Prostate gland (tissue), 2 donors: ENCODE measurements at regions of chr2 and their contacts with region 1.

Region 1: DNA sequence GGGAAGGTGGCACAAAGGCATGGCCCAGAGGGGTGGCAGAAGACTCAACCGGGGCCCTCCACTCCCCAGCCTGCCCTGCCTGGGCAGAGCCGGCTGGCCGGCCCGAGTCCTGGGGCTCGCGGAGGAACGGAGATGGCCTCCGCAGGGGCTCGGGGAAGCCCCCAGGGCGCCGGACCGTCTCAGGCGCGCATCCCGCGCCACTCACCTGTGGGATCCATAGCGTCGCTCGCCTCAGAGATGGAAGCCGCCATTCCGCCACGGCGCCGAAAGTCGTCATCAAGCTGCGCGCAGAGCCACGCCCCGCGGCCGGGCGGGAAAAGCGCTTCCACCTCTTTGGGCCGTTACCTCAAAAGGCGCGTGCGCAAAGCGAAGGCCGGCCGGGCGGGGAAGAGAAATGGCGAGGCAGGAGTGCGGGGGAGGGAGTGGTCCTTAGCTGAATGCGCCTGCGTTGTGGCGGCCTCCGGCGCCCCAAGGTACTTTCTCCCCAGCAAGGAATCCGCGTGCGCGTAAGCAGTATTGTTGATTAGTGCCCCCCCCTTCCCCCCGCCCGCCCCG is at the start of gene SMPD4:
- DNase-seq: peak; percentile 96
- H3K4me3 ChIP-seq: peak within 1 kb of the TSS; percentile 98
- H3K27ac ChIP-seq: peak within 1 kb of the TSS; percentile 89 to 93
- H3K4me1 ChIP-seq: peaks cover 5% of the 10 kb centered on the region
- H3K27me3 ChIP-seq: no peaks in the 10 kb centered on the region
- CTCF ChIP-seq: peak in 1 of 4 experiments; percentile 25
- POLR2A ChIP-seq: peak; percentile 37
- total RNA-seq, gene SMPD4: 38.1 to 74.5 TPM

Region 2: DNA sequence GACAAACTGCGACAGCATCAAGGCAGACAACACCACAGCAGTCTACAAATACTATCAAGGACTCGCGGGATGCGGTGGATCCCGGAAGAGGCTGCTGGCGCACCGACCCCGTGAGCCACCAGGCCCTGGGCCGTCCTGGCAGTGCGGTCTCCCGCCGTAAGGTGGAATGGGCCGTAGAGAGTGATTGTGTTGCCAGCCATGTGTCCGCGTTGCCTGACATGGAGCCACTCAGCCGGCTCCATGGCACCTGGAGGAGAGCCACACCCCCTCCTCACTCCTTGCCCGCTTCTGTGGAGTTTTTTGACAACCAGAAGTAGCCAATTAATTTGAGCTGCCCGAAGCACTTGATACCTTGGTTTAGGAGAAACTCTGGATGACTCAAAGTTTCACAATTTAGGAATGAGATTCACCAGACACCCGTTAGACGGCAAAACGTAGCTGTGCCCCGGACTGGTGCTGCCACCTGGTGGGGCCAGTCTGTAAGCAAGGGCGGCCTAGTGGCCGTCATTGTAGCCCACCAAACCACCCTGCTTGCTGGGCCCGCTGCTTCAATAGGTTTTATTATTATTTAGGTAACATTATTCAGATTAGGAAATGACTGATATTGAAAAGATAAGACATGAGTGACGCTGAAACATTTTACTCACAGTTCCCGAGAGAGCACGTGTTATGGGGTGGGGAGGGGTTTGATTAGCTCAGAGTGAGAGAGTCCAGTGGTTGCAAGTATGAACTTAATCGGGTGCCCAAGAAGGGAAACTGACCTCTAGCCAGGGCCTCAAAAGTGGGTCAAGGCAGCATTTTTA is 151.1 kb after region 1 on chr2:
- intact Hi-C with region 1: loop called (anchors 2 kb)
- DNase-seq: peak; percentile 60
- H3K4me3 ChIP-seq: no peak overlapping the region
- H3K27ac ChIP-seq: no peak overlapping the region
- H3K4me1 ChIP-seq: no peaks in the 10 kb centered on the region
- H3K27me3 ChIP-seq: no peaks in the 10 kb centered on the region
- CTCF ChIP-seq: peak; percentile 76 to 93 (median 92)
- POLR2A ChIP-seq: no peak

Region 3: DNA sequence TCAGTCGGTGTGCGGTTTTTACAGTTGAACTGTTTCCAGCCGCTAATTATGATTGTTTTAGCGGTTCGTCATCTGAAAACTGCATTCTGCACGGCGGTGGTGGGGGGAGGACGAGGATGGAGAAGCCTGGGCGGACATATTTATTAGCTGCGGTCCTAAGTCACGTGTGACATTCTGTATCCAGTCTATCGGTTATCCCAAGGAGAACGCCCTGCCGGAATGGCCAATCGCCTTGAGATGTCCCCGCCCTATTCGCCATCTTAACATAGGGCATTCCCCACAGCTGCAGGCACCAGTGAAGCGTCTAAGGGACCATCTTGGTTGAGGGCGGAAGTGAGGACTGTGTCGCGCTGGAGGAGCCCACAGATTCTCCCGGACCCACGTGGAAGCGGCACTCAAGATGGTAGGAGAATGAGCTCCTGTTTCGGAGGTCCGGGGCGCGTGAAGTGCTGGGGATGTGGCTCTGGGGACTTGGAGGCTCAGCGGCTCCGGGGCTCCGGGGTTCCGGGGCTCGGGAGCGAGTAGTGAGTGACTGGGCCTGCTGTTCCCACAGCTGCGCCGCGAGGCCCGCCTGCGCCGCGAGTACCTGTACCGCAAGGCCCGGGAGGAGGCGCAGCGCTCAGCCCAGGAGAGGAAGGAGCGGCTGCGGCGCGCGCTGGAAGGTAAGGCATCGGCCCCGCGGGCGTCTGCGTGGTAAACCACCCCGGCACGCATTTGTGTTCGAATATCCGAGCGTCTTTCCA is 161.3 kb after region 1 on chr2 and contains the start of gene IMP4:
- intact Hi-C with region 1: loop called (anchors 2 kb)
- DNase-seq: peak; percentile 99
- H3K4me3 ChIP-seq: peak within 1 kb of the TSS; percentile 71
- H3K27ac ChIP-seq: peak within 1 kb of the TSS; percentile 91 to 92
- H3K4me1 ChIP-seq: no peaks in the 10 kb centered on the region
- H3K27me3 ChIP-seq: no peaks in the 10 kb centered on the region
- CTCF ChIP-seq: peak in 3 of 4 experiments; percentile 11 to 50 (median 48)
- POLR2A ChIP-seq: peak; percentile 7
- total RNA-seq, gene IMP4: 71.4 to 106 TPM

Region 4: GRCh38 chr2:131105156-131105949 is 924.0 kb after region 1 on chr2 and contains the start of gene PLEKHB2:
- intact Hi-C with region 1: loop called (anchors 10 kb)
- DNase-seq: peak; percentile 85
- H3K4me3 ChIP-seq: peak within 1 kb of the TSS; percentile 75 to 90
- H3K27ac ChIP-seq: peak within 1 kb of the TSS; percentile 87 to 90
- H3K4me1 ChIP-seq: peaks cover 5% of the 10 kb centered on the region
- H3K27me3 ChIP-seq: no peaks in the 10 kb centered on the region
- CTCF ChIP-seq: peak in 2 of 4 experiments; percentile 25 to 45
- POLR2A ChIP-seq: peak; percentile 94
- total RNA-seq, gene PLEKHB2: 77.1 to 107 TPM